ENCODE measurements at regions of chr2 and their contacts with region 1.

Region 1: DNA sequence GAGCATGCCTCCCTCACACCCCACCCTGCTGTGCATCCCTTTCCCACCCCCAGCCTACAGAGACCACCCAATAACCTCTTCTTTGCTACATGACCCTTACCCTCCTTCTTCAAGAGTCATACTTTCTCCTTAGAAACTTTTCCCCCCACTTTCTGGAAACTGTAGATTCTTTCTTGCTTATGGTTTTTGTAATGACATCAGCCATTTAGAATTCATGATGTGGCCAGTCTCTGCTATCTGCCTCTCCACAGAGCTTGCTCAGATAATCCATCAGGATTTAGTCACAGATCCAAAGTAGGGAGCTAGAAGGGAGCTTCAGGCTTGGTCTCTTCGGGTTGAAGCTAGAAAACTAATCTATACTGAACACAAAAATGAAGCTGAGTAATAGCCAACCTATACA is 36.5 kb downstream of the GALM start:
- DNase-seq: peak; percentile 82
- H3K4me3 ChIP-seq: no peak overlapping the region
- H3K27ac ChIP-seq: peak overlapping the region; percentile 75
- H3K27me3 ChIP-seq: no peaks in the 10 kb centered on the region
- CTCF ChIP-seq: no peak

Region 2: GRCh38 chr2:38590053-38590452 is 112.4 kb before region 1 on chr2:
- CTCF ChIA-PET with region 1: no interaction called
- POLR2A ChIA-PET with region 1: no interaction called
- DNase-seq: no peak
- H3K4me3 ChIP-seq: no peak overlapping the region
- H3K27ac ChIP-seq: no peak overlapping the region
- H3K27me3 ChIP-seq: no peaks in the 10 kb centered on the region
- CTCF ChIP-seq: peak; percentile 36

Region 3: GRCh38 chr2:38690499-38691294 is 11.7 kb before region 1 on chr2:
- CTCF ChIA-PET with region 1: no interaction called
- POLR2A ChIA-PET with region 1: interaction called, 12 read pairs
- DNase-seq: peak; percentile 84
- H3K4me3 ChIP-seq: no peak overlapping the region
- H3K27ac ChIP-seq: peak overlapping the region; percentile 90
- H3K27me3 ChIP-seq: no peaks in the 10 kb centered on the region
- CTCF ChIP-seq: no peak